ENCODE measurements at regions of chr7 and their contacts with region 1.

Region 1: GRCh38 chr7:92904292-92905131 is 68.1 kb upstream of the CDK6 start:
- H3K4me3 Mint-ChIP-seq: no peak overlapping the region
- H3K27ac Mint-ChIP-seq: peak overlapping the region; percentile 11
- H3K4me1 Mint-ChIP-seq: peaks cover 17% of the 10 kb centered on the region
- H3K27me3 Mint-ChIP-seq: no peaks in the 10 kb centered on the region

Region 2: DNA sequence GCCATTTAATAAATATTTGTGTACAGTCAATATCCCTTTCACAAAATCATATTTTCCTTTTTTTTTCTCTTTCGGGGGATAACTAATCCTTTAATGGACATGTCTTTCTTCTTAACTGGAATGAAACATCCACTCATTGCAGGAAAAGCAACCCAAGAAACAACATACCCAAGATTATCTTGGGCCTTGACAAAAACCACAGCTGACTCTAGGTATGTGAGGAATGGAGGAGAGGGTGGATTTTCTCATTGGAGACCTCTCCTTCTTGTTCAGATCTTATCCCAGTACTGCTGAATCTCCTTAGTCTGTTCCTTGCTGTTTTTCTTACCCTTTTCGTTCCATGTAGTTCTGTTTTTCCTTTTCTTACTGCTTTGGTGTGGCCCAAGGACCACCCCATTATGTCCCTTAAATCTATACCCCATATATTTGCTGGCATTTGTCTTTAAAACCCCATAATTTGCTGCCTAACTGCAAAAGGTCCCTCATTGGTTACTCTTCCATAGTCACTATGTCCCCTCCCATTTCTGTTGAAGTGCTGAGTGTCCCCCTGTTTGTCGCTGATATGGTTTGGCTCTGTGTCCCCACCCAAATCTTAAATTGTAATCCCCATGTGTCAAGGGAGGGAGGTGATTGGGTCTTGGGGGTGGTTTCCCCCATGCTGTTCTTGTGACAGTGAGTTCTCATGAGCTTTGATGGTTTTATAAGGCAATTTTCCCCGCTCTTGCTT is 61.3 kb before region 1 on chr7:
- intact Hi-C with region 1: loop called (anchors 10 kb)
- H3K4me3 Mint-ChIP-seq: no peak overlapping the region
- H3K27ac Mint-ChIP-seq: no peak overlapping the region
- H3K4me1 Mint-ChIP-seq: no peaks in the 10 kb centered on the region
- H3K27me3 Mint-ChIP-seq: no peaks in the 10 kb centered on the region